ENCODE measurements at regions of chr17 and their contacts with region 1.

Region 1: DNA sequence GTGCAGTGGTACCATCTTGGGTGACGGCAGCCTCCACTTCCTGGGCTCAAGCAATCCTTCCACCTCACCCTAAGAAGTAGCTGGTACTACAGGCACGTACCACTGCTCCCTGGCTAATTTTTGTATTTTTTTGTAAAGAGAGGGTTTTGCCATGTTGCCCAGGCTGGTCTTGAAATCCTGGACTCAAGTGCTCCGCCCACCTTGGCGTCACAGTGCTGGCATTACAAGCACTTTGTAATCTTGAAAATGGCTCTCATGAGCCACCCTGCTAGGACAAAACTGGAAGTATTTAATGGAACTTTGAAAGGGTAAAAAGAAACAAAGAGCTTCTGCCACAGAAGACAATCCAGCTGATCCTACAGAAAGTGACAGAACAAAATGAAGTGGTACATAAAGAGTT is 9.2 kb downstream of the SUMO2 start:
- DNase-seq: peak in 1 of 10 donors; percentile 6
- H3K4me3 ChIP-seq: no peak overlapping the region
- H3K27ac ChIP-seq: no peak overlapping the region
- H3K27me3 ChIP-seq: no peaks in the 10 kb centered on the region
- CTCF ChIP-seq: no peak

Region 2: GRCh38 chr17:75059369-75060345 is 113.9 kb before region 1 on chr17:
- intact Hi-C with region 1: loop called in 1 of 2 experiments (anchors 10 kb)
- DNase-seq: peak in 7 of 10 donors; percentile 50 to 76 (median 61)
- H3K4me3 ChIP-seq: peak overlapping the region in 15 of 59 donors; percentile 2 to 38 (median 15)
- H3K27ac ChIP-seq: peak overlapping the region; percentile 1 to 94 (median 86)
- H3K27me3 ChIP-seq: no peaks in the 10 kb centered on the region
- CTCF ChIP-seq: peak; percentile 22 to 76 (median 63)

Region 3: GRCh38 chr17:75096082-75096625 is 77.4 kb before region 1 on chr17:
- intact Hi-C with region 1: no loop called
- DNase-seq: no peak
- H3K4me3 ChIP-seq: no peak overlapping the region
- H3K27ac ChIP-seq: no peak overlapping the region
- H3K27me3 ChIP-seq: no peaks in the 10 kb centered on the region
- CTCF ChIP-seq: no peak

Region 4: GRCh38 chr17:75113798-75114551 is 59.6 kb before region 1 on chr17:
- intact Hi-C with region 1: no loop called
- DNase-seq: peak; percentile 67 to 94 (median 87)
- H3K4me3 ChIP-seq: peak overlapping the region in 58 of 59 donors; percentile 36 to 88 (median 60)
- H3K27ac ChIP-seq: peak overlapping the region in 58 of 59 donors; percentile 3 to 92 (median 82)
- H3K27me3 ChIP-seq: no peaks in the 10 kb centered on the region
- CTCF ChIP-seq: peak; percentile 88 to 99 (median 96)

Region 5: GRCh38 chr17:75131280-75132017 is 42.1 kb before region 1 on chr17 and contains the start of gene NT5C:
- intact Hi-C with region 1: loop called in 1 of 2 experiments (anchors 5 kb)
- DNase-seq: peak; percentile 63 to 84 (median 70)
- H3K4me3 ChIP-seq: peak within 1 kb of the TSS; percentile 58 to 95 (median 83)
- H3K27ac ChIP-seq: peak within 1 kb of the TSS; percentile 27 to 96 (median 90)
- H3K27me3 ChIP-seq: no peaks in the 10 kb centered on the region
- CTCF ChIP-seq: peak in 55 of 56 donors; percentile 9 to 83 (median 62)
- total RNA-seq, gene NT5C: 7.5 to 35.9 (median 18.9) TPM

Measured in dorsolateral prefrontal cortex (tissue), 120 donors.